CD8-positive, alpha-beta T cell (primary cell): ENCODE measurements at regions of chr5 and their contacts with region 1.

Region 1: DNA sequence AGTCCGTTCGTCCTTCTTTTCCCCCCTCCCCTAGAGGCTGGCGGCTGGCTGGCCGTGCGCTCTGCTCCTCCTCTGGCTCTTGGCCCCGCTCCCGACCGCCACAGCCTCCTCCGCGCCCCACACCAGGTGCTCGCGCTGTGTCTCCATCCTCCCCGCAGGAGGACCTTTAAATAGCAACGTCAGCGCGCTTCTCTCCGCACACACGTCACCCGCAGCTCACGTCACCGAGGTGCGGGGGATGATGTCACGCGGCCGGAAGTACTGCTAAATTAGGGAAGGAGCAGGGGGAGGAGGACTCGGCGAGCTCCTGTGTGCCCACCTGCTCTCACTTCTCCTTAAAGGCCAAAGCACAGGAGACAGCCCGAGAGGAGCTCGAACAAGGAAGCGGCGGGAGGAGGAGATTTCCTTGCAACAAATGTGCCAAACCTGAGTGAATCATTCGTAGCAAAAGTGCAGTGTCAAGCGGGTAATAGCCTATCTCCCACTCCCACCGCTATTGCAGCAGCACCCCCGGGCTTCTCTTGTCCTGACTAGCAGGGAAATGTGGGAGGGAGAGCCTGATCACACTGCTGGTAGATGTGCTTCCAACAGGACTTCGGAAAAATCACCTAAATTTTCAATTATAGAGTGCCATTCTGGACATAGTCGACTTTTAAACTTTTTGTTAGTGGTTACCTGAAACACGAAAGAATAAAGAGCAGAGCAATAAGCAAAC is 614 bp upstream of the HOMER1 start:
- DNase-seq: peak; percentile 80 to 98 (median 92)
- ATAC-seq: peak; percentile 84
- H3K4me3 ChIP-seq: peak overlapping the region; percentile 62 to 73
- H3K4me3 Mint-ChIP-seq: peak overlapping the region; percentile 99
- H3K27ac ChIP-seq: peak overlapping the region; percentile 91 to 97
- H3K27ac Mint-ChIP-seq: peak overlapping the region; percentile 99
- H3K4me1 ChIP-seq: peaks cover 19% of the 10 kb centered on the region
- H3K4me1 Mint-ChIP-seq: peaks cover 42% of the 10 kb centered on the region
- H3K27me3 ChIP-seq: peaks cover 6 to 7% of the 10 kb centered on the region in 2 experiments
- H3K27me3 Mint-ChIP-seq: peaks cover 5% of the 10 kb centered on the region
- CTCF ChIP-seq: peak; percentile 13

Region 2: DNA sequence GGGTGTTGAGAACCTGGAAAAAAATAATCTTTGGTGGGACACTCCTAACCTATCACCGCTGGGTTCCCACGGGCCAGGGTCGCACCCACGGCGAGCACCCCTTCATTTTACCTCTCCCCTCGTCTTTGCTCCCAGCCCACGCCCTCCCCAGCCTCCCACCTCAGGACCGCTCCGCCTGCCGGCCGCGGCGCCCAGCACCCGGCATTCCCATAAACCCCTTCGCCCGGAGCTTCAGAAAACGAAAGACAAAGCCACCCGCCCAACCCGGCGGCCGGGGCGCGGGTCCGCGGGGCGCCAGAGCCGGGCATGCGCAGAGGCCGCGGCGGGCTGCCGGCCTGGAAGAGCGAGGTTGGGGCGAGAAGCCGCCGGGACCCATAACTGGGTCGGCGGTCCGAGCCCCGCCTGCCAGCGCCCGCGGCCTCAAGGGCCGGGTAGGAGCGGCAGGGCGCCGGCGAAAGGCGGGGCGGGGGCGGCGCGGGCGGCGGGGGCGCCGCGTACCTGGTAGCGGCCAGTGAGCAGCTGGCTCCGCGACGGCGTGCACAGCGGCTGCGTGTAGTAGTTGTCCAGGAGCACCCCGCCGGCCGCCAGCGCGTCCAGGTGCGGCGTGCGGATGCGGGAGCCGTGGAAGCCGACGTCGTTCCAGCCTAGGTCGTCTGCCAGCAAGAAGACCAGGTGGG is 530.0 kb before region 1 on chr5:
- CTCF ChIA-PET with region 1: no interaction called
- POLR2A ChIA-PET with region 1: no interaction called
- intact Hi-C with region 1: loop called in 1 of 2 experiments (anchors 1 kb)
- DNase-seq: peak; percentile 55 to 90 (median 75)
- ATAC-seq: peak; percentile 74
- H3K4me3 ChIP-seq: peak overlapping the region; percentile 54 to 68
- H3K4me3 Mint-ChIP-seq: peak overlapping the region; percentile 94
- H3K27ac ChIP-seq: peak overlapping the region; percentile 40 to 75
- H3K27ac Mint-ChIP-seq: peak overlapping the region; percentile 92
- H3K4me1 ChIP-seq: peaks cover 14% of the 10 kb centered on the region
- H3K4me1 Mint-ChIP-seq: peaks cover 28% of the 10 kb centered on the region
- H3K27me3 ChIP-seq: no peaks in the 10 kb centered on the region
- H3K27me3 Mint-ChIP-seq: no peaks in the 10 kb centered on the region
- CTCF ChIP-seq: no peak

Region 3: DNA sequence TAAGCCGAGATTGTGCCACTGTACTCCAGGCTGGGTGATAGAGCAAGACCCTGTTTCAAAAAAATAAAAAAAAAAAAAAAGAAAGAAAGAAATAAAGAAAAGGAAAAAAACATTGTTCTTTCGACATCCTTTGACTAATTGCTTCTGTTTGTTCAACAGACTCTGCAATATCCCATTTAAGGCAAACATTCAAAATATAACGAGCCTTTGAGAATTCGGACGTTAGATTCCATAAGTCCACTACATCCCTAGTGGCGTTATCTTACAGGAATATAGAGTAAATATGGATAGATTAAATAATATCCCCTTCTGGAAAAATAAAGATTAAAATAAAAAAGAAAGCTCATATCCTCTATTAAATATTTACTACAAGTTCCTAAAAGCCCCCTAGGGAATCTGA is 26.4 kb after region 1 on chr5:
- CTCF ChIA-PET with region 1: no interaction called
- POLR2A ChIA-PET with region 1: no interaction called
- intact Hi-C with region 1: no loop called
- DNase-seq: no peak
- ATAC-seq: no peak
- H3K4me3 ChIP-seq: no peak overlapping the region
- H3K4me3 Mint-ChIP-seq: no peak overlapping the region
- H3K27ac ChIP-seq: no peak overlapping the region
- H3K27ac Mint-ChIP-seq: no peak overlapping the region
- H3K4me1 ChIP-seq: no peaks in the 10 kb centered on the region
- H3K4me1 Mint-ChIP-seq: no peaks in the 10 kb centered on the region
- H3K27me3 ChIP-seq: no peaks in the 10 kb centered on the region
- H3K27me3 Mint-ChIP-seq: peaks cover 8% of the 10 kb centered on the region
- CTCF ChIP-seq: no peak

Region 4: DNA sequence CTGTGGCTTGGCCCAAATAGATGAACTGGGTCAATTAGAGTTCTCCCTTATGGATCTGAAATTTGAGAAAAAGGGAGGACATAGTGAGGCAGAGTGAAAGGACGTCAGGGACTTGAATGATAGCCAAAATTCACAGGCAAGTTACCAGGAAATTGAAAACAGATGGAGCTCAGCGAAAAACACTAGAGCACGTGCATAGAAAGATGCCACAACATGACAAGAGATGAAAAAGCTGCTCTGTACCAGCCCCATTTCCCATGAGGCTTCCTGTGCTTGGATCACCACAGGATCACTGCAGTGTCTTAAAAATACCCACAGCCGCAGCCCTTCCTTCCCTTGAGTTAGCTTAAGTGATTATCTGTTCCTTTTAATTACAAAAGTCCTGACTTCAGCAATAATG is 38.4 kb after region 1 on chr5:
- CTCF ChIA-PET with region 1: interaction called, 4 read pairs
- POLR2A ChIA-PET with region 1: no interaction called
- intact Hi-C with region 1: loop called in 1 of 2 experiments (anchors 1 kb)
- DNase-seq: peak in 1 of 9 experiments; percentile 26
- ATAC-seq: no peak
- H3K4me3 ChIP-seq: no peak overlapping the region
- H3K4me3 Mint-ChIP-seq: no peak overlapping the region
- H3K27ac ChIP-seq: no peak overlapping the region
- H3K27ac Mint-ChIP-seq: no peak overlapping the region
- H3K4me1 ChIP-seq: peaks cover 3% of the 10 kb centered on the region
- H3K4me1 Mint-ChIP-seq: peaks cover 9% of the 10 kb centered on the region
- H3K27me3 ChIP-seq: no peaks in the 10 kb centered on the region
- H3K27me3 Mint-ChIP-seq: no peaks in the 10 kb centered on the region
- CTCF ChIP-seq: no peak

Region 5: DNA sequence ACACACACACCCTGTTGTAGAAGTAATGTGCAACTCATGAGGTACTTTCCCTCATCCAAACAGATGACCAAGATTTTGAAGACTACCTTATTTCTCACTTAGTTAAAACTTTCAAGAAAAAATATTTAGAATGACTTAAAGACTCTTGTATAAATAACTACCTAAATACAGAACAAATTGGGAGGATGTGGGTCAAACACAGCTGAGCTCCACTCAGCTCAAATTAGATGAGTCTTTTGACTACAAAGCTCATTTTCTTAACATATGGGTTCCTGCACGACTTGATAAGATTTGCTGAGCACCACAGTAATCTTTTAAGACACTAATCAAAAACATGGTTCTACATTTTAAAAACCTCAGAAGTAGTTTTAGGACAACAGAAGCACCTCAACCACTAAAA is 467.6 kb after region 1 on chr5:
- CTCF ChIA-PET with region 1: no interaction called
- POLR2A ChIA-PET with region 1: no interaction called
- intact Hi-C with region 1: loop called in 1 of 2 experiments (anchors 10 kb)
- DNase-seq: peak in 1 of 9 experiments; percentile 3
- ATAC-seq: no peak
- H3K4me3 ChIP-seq: no peak overlapping the region
- H3K4me3 Mint-ChIP-seq: peak overlapping the region; percentile 33
- H3K27ac ChIP-seq: no peak overlapping the region
- H3K27ac Mint-ChIP-seq: peak overlapping the region; percentile 82
- H3K4me1 ChIP-seq: peaks cover 26% of the 10 kb centered on the region
- H3K4me1 Mint-ChIP-seq: peaks cover 46% of the 10 kb centered on the region
- H3K27me3 ChIP-seq: no peaks in the 10 kb centered on the region
- H3K27me3 Mint-ChIP-seq: no peaks in the 10 kb centered on the region
- CTCF ChIP-seq: no peak

Region 6: DNA sequence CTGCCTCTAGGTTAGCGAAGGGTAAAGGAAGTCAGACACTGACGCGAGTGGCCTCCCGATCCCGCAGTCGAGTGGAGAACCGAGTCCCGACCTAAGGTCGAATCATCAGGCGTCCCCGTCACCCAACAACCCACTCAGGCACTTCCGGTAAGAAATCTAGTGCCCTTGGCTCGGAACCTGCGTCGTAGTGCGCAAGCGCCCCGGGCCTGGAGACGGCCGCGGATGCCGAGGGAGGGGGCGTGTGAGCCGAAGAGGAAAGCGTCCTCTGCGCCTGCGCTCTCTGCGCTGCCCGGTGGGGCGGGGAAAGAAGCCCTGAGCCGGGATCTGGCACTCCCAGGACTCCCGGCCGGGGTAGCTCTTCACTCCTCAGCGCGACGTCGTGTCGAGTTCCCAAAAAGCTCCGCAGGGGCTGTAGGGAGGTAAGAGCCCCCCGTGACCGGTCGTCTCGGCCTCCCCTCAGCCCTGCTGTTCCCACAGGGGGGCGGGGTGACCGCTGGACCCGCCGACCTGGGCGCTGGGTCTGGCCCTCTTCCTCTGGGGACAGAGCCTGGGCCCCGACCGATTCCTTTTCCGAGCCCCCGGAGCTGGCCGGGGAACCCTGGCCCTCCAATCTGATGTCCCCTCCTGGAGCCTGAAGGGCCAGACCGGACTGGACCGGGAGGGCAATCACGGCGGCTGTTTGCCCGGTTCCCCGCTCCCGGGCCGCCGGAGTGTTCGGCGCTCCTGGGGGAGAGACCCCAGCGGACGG is 893.4 kb after region 1 on chr5 and contains the start of gene ZFYVE16:
- CTCF ChIA-PET with region 1: no interaction called
- POLR2A ChIA-PET with region 1: no interaction called
- intact Hi-C with region 1: loop called (anchors 5 kb)
- DNase-seq: peak; percentile 91 to 99 (median 97)
- ATAC-seq: peak; percentile 88
- H3K4me3 ChIP-seq: peak within 1 kb of the TSS; percentile 86 to 94
- H3K4me3 Mint-ChIP-seq: peak within 1 kb of the TSS; percentile 99
- H3K27ac ChIP-seq: peak within 1 kb of the TSS; percentile 78 to 93
- H3K27ac Mint-ChIP-seq: peak within 1 kb of the TSS; percentile 100
- H3K4me1 ChIP-seq: peaks cover 12% of the 10 kb centered on the region
- H3K4me1 Mint-ChIP-seq: peaks cover 28% of the 10 kb centered on the region
- H3K27me3 ChIP-seq: no peaks in the 10 kb centered on the region
- H3K27me3 Mint-ChIP-seq: no peaks in the 10 kb centered on the region
- CTCF ChIP-seq: no peak
- total RNA-seq, gene ZFYVE16: 7.6 to 9.9 TPM